Cardiac septum (tissue), 1 donor: ENCODE measurements at regions of chr17 and their contacts with region 1.

Region 1: DNA sequence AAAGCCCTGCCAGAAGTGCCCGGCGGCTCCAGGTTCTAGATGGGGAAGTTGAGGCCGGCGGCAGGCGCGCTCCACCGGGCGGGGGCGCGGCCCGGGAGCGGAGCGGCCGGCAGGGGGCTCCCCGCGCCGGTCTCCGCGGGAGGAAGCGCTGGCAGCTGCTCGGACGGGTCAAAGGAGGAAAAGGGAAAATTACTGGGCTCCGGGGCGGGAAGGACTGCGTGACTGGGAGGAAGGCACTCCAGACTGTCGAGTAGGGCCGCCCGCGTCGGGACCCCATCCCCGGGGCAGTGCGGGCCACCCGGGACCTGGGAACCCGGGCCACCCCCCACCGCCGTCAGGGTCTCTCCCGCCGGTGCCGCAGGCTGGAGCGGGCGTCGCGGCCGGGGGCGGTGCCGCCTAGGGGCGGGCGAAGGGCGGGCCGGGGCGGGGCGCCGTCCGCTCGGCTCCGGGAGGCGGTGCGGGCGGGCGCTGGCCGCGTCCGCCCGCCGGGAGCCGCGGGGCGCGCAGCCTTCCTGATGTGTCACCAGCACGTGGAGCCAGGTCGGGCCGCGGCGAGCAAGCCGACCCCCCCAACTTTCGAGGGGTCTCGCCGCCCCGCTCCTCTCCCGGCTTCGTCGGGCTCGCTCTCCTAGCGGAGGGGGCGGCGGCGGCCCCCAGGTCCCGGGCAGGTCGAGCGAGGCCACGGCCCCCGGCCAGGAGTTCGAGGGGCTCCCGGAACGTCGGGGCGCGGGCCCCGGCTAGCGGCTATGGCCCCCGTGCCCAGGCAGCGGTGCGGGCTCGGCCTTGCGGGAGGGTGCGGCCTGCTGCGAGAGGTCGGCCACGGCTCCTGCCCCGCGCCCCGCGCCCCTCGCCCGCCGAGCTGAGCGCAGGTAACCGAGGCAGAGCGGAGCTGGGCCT is 167.5 kb downstream of the RAB11FIP4 start:
- DNase-seq: peak; percentile 91

Region 2: DNA sequence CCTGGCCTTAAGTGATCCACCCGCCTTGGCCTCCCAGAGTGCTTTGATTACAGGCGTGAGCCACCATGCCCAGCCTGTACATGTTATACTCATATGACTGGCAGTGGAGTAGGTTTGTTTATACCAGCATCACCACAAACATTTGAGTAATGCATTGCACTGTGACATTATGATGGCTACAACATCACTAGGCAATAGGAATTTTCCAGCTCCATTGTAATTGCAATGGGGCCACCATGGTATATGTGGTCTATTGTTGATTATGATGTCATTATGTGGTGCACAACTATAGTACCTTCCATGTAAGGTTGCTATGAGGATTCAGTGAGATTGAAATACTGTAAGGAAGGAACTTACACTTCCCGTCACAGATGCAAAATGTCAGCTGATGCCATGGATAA is 131.2 kb after region 1 on chr17:
- intact Hi-C with region 1: loop called (anchors 5 kb)
- DNase-seq: no peak